ENCODE measurements at regions of chr3 and their contacts with region 1.

Region 1: GRCh38 chr3:194315088-194315964 is 35.8 kb downstream of the CPN2 start:
- DNase-seq: peak; percentile 88 to 93 (median 90)
- ATAC-seq: peak; percentile 93
- H3K4me3 ChIP-seq: peak overlapping the region; percentile 47
- H3K27ac ChIP-seq: peak overlapping the region; percentile 42; the same call in 1 of the 3 replicates
- H3K4me1 ChIP-seq: peaks cover 12 to 14% of the 10 kb centered on the region in 2 experiments
- H3K27me3 ChIP-seq: no peaks in the 10 kb centered on the region
- CTCF ChIP-seq: peak; percentile 87 to 94 (median 92)
- EP300 ChIP-seq: no peak
- POLR2A ChIP-seq: no peak
- RAD21 ChIP-seq: peak; percentile 97 to 99

Region 2: DNA sequence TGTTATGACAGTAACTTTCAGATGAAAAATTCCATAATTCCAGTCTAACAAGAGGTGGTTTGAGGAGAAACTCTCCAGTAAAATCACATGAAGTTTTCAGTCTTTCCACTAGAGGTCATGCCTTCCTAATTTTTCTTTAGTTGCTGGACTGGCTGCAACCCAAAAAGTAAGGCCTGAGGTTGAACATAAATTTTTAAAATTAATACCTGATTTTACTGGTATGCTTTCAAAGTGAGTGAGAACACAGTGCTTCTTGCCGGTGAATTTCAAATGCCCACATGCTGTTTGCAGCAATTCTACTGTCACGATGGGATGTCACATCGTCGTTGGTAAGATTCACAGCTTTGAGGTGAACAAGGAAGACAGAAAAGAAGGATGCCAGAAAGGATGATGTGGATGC is 1499.0 kb before region 1 on chr3:
- CTCF ChIA-PET with region 1: no interaction called
- POLR2A ChIA-PET with region 1: no interaction called
- in situ Hi-C with region 1: loop called (anchors 25 kb)
- intact Hi-C with region 1: loop called (anchors 10 kb)
- DNase-seq: peak; percentile 17 to 36 (median 23)
- ATAC-seq: peak; percentile 63; the same call in 2 of the 3 replicates
- H3K4me3 ChIP-seq: no peak overlapping the region
- H3K27ac ChIP-seq: no peak overlapping the region
- H3K4me1 ChIP-seq: no peaks in the 10 kb centered on the region
- H3K27me3 ChIP-seq: peaks cover 0 to 4% of the 10 kb centered on the region in 2 experiments; a peak in 1 of 5 replicates
- CTCF ChIP-seq: peak; percentile 43 to 71 (median 58); a peak in 4 of 6 replicates
- EP300 ChIP-seq: no peak
- POLR2A ChIP-seq: no peak
- RAD21 ChIP-seq: peak; percentile 78 to 79

Region 3: GRCh38 chr3:193665370-193665989 is 649.8 kb before region 1 on chr3:
- CTCF ChIA-PET with region 1: no interaction called
- POLR2A ChIA-PET with region 1: interaction called, 3 read pairs
- in situ Hi-C with region 1: no loop called
- intact Hi-C with region 1: loop called (anchors 5 kb)
- DNase-seq: peak in 1 of 4 experiments; percentile 34
- ATAC-seq: no peak
- H3K4me3 ChIP-seq: no peak overlapping the region
- H3K27ac ChIP-seq: no peak overlapping the region
- H3K4me1 ChIP-seq: peaks cover 0 to 30% of the 10 kb centered on the region in 2 experiments; a peak in 3 of 5 replicates
- H3K27me3 ChIP-seq: no peaks in the 10 kb centered on the region
- CTCF ChIP-seq: peak in 1 of 3 experiments; percentile 55; a peak in 2 of 6 replicates
- EP300 ChIP-seq: no peak
- POLR2A ChIP-seq: no peak
- RAD21 ChIP-seq: peak; percentile 44 to 53

Region 4: GRCh38 chr3:193788189-193788991 is 526.9 kb before region 1 on chr3:
- CTCF ChIA-PET with region 1: interaction called, 7 read pairs
- POLR2A ChIA-PET with region 1: no interaction called
- in situ Hi-C with region 1: loop called (anchors 5 kb)
- intact Hi-C with region 1: loop called (anchors 2 kb)
- DNase-seq: peak; percentile 83 to 89 (median 85)
- ATAC-seq: peak; percentile 99
- H3K4me3 ChIP-seq: no peak overlapping the region
- H3K27ac ChIP-seq: no peak overlapping the region
- H3K4me1 ChIP-seq: peaks cover 10 to 13% of the 10 kb centered on the region in 2 experiments; a peak in 3 of 5 replicates
- H3K27me3 ChIP-seq: no peaks in the 10 kb centered on the region
- CTCF ChIP-seq: peak; percentile 86 to 95 (median 93)
- EP300 ChIP-seq: peak; percentile 59
- POLR2A ChIP-seq: no peak
- RAD21 ChIP-seq: peak; percentile 95 to 96

Region 5: DNA sequence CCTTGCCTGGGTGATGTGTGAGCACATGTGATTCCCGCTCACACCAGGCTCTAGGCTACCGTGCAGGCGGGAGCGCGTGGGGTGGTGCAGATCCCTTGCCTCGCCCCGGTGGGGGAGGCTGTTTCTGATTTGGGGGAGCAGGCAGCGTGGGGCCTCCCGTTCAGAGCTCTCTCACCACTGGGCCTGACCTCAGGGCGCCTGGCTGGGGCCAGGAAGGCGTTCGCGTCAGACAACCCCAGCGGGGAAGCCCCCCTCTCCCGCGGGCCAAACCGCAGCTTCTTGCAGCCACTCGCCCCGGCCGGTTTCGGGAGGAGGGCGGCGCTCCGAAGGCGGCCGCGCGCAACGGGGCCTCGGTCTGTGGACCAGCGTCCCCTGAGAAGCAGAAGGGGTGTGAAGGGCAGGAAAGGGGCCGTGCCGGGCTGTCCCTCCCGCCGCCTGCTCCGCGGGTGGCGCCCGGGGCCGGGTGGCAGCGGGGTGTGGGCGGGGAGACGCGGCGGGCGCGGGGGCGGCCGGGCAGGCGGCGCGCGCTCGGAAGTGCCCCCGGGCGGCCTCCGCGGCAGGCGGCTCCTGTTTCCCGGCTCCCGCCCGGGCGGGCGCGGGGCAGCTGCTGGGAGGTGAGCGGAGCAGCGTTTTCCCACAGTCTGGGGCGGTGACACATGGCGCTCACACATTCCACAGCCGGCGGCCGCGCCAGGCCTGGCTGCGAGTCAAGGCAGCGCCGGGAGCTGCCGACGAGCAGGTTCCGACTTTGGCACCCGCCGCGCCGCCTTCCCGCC is 244.5 kb before region 1 on chr3:
- CTCF ChIA-PET with region 1: no interaction called
- POLR2A ChIA-PET with region 1: no interaction called
- in situ Hi-C with region 1: no loop called
- intact Hi-C with region 1: loop called (anchors 10 kb)
- DNase-seq: peak; percentile 72 to 93 (median 87)
- ATAC-seq: peak; percentile 89
- H3K4me3 ChIP-seq: peak overlapping the region; percentile 48
- H3K27ac ChIP-seq: peak overlapping the region; percentile 79; the same call in 2 of the 3 replicates
- H3K4me1 ChIP-seq: peaks cover 21% of the 10 kb centered on the region in 2 experiments
- H3K27me3 ChIP-seq: no peaks in the 10 kb centered on the region
- CTCF ChIP-seq: no peak
- EP300 ChIP-seq: no peak
- POLR2A ChIP-seq: peak; percentile 61; the same call in 1 of the 2 replicates
- RAD21 ChIP-seq: peak in 1 of 2 experiments; percentile 13; a peak in 1 of 4 replicates

Region 6: GRCh38 chr3:194166682-194167479 is 148.4 kb before region 1 on chr3:
- CTCF ChIA-PET with region 1: no interaction called
- POLR2A ChIA-PET with region 1: no interaction called
- in situ Hi-C with region 1: loop called (anchors 10 kb)
- intact Hi-C with region 1: loop called (anchors 5 kb)
- DNase-seq: peak; percentile 20 to 69 (median 38)
- ATAC-seq: peak; percentile 80
- H3K4me3 ChIP-seq: 0 out of 2 replicates have a peak overlapping the region, but pooled peaks have one; percentile 5
- H3K27ac ChIP-seq: peak overlapping the region; percentile 12; the same call in 1 of the 3 replicates
- H3K4me1 ChIP-seq: peaks cover 0 to 18% of the 10 kb centered on the region in 2 experiments; a peak in 4 of 5 replicates
- H3K27me3 ChIP-seq: no peaks in the 10 kb centered on the region
- CTCF ChIP-seq: no peak
- EP300 ChIP-seq: no peak; the same call in 1 of the 2 replicates
- POLR2A ChIP-seq: no peak
- RAD21 ChIP-seq: peak in 1 of 2 experiments; percentile 8; a peak in 1 of 4 replicates